CD8-positive, alpha-beta T cell (primary cell): ENCODE measurements at regions of chr2 and their contacts with region 1.

Region 1: GRCh38 chr2:46915811-46916630 is 415 bp upstream of the MCFD2 start:
- DNase-seq: peak; percentile 60 to 92 (median 81)
- ATAC-seq: peak; percentile 80
- H3K4me3 ChIP-seq: peak overlapping the region; percentile 87 to 99
- H3K4me3 Mint-ChIP-seq: peak overlapping the region; percentile 89
- H3K27ac ChIP-seq: peak overlapping the region; percentile 86 to 91
- H3K27ac Mint-ChIP-seq: peak overlapping the region; percentile 85
- H3K4me1 ChIP-seq: peaks cover 39% of the 10 kb centered on the region
- H3K4me1 Mint-ChIP-seq: peaks cover 53% of the 10 kb centered on the region
- H3K27me3 ChIP-seq: no peaks in the 10 kb centered on the region
- H3K27me3 Mint-ChIP-seq: no peaks in the 10 kb centered on the region
- CTCF ChIP-seq: no peak

Region 2: GRCh38 chr2:46836295-46837111 is 79.5 kb before region 1 on chr2:
- CTCF ChIA-PET with region 1: no interaction called
- POLR2A ChIA-PET with region 1: no interaction called
- intact Hi-C with region 1: no loop called
- DNase-seq: no peak
- ATAC-seq: no peak
- H3K4me3 ChIP-seq: no peak overlapping the region
- H3K4me3 Mint-ChIP-seq: no peak overlapping the region
- H3K27ac ChIP-seq: no peak overlapping the region
- H3K27ac Mint-ChIP-seq: no peak overlapping the region
- H3K4me1 ChIP-seq: no peaks in the 10 kb centered on the region
- H3K4me1 Mint-ChIP-seq: no peaks in the 10 kb centered on the region
- H3K27me3 ChIP-seq: no peaks in the 10 kb centered on the region
- H3K27me3 Mint-ChIP-seq: no peaks in the 10 kb centered on the region
- CTCF ChIP-seq: no peak

Region 3: DNA sequence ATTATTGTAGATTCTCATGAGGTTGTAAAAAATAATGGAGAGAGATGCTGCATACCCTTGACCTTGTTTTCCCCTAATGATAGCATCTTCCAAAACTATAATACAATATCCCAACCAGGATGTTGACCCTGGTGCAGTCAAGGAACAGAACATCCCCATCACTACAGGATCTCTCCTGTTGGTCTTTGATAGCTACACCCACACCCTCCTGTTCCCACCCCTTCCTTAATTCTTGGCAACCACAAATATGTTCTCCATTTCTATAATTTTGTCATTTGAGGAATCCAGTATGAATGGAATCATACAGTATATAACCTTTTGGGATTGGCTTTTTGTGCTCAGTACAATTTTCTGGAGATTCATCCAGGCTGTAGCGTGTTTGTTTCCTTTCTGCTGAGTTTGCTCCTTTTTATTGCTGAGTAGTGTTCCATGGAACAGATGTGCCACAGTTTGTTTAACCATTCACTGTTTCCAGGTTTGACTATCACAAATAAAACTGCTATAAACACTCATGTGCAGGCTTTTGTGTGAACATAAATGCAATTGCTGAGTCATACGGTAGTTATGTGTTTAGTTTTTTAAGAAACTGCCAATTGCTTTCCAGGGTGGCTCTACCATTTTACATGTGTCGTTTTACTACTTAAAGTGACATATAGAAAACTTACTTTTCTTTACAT is 22.6 kb before region 1 on chr2:
- CTCF ChIA-PET with region 1: no interaction called
- POLR2A ChIA-PET with region 1: no interaction called
- intact Hi-C with region 1: no loop called
- DNase-seq: no peak
- ATAC-seq: no peak
- H3K4me3 ChIP-seq: no peak overlapping the region
- H3K4me3 Mint-ChIP-seq: no peak overlapping the region
- H3K27ac ChIP-seq: no peak overlapping the region
- H3K27ac Mint-ChIP-seq: no peak overlapping the region
- H3K4me1 ChIP-seq: no peaks in the 10 kb centered on the region
- H3K4me1 Mint-ChIP-seq: peaks cover 2% of the 10 kb centered on the region
- H3K27me3 ChIP-seq: no peaks in the 10 kb centered on the region
- H3K27me3 Mint-ChIP-seq: no peaks in the 10 kb centered on the region
- CTCF ChIP-seq: no peak

Region 4: DNA sequence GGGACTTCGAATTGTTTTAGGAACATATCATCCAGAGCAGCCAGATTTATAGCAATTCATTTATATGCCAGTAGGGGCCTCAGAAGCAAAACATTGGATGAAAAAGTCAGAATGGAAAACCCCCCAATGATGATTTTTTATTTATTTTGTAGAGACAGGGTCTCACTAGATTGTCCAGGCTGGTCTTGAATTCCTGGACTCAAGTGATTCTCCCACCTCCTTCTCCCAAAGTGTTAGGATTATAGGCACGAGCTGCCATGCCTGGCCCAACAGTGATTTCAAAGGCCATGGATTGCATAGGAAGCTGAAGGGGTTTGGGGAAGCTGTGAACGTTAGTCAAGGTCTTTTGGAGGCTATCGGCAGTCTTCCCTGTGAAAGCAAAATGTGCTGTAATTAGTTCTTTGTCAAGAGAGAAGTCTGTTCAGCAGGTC is 21.5 kb after region 1 on chr2:
- CTCF ChIA-PET with region 1: interaction called, 35 read pairs
- POLR2A ChIA-PET with region 1: no interaction called
- intact Hi-C with region 1: loop called in 1 of 2 experiments (anchors 1 kb)
- DNase-seq: peak in 2 of 9 experiments; percentile 33 to 50
- ATAC-seq: no peak
- H3K4me3 ChIP-seq: no peak overlapping the region
- H3K4me3 Mint-ChIP-seq: no peak overlapping the region
- H3K27ac ChIP-seq: no peak overlapping the region
- H3K27ac Mint-ChIP-seq: peak overlapping the region; percentile 55
- H3K4me1 ChIP-seq: peaks cover 9% of the 10 kb centered on the region
- H3K4me1 Mint-ChIP-seq: peaks cover 41% of the 10 kb centered on the region
- H3K27me3 ChIP-seq: no peaks in the 10 kb centered on the region
- H3K27me3 Mint-ChIP-seq: no peaks in the 10 kb centered on the region
- CTCF ChIP-seq: peak; percentile 55

Region 5: GRCh38 chr2:47323009-47323821 is 407.2 kb after region 1 on chr2:
- CTCF ChIA-PET with region 1: interaction called, 3 read pairs
- POLR2A ChIA-PET with region 1: no interaction called
- intact Hi-C with region 1: loop called (anchors 5 kb)
- DNase-seq: peak; percentile 37 to 77 (median 61)
- ATAC-seq: peak; percentile 98
- H3K4me3 ChIP-seq: no peak overlapping the region
- H3K4me3 Mint-ChIP-seq: no peak overlapping the region
- H3K27ac ChIP-seq: no peak overlapping the region
- H3K27ac Mint-ChIP-seq: no peak overlapping the region
- H3K4me1 ChIP-seq: no peaks in the 10 kb centered on the region
- H3K4me1 Mint-ChIP-seq: no peaks in the 10 kb centered on the region
- H3K27me3 ChIP-seq: peaks cover 0 to 5% of the 10 kb centered on the region in 2 experiments
- H3K27me3 Mint-ChIP-seq: peaks cover 9% of the 10 kb centered on the region
- CTCF ChIP-seq: peak; percentile 68

Region 6: DNA sequence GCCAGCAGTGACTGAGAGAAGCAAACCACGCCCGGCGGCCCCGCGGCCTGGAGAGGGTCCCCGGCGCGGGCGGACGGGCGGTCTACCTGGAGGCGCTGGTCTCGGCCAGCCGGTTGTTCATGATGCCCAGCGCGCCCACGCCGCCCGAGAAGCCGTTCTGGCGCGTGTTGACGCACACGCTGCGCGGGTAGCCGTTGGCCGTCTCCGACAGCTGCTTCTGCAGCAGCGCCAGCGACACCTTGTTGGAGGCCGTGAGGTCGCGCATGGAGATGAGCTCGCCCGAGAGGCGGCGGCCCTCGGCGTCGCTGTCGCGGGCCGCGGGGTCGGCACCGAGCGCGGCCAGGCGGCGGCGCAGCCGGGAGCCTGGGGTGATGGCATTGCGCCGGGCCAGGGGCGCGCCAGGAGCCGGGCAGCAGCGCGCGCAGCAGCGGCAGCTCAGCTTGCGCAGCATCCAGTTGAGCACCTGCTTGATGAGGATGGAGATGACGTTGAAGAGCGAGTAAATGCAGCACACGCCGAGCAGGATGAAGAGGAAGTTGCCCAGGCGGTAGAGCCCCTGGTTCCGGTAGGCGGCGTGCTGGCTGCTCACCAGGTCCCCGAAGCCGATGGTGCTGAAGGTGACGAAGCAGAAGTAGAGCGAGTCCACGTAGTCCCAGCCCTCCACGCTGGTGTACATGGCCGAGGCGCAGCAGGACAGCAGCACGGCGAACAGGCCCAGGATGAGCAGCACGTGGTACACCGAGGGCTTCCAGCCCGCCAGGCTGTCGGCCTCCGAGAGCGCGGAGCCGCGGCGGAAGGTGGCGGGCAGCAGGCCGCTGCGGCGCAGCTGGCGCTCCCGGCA is 605.0 kb after region 1 on chr2:
- CTCF ChIA-PET with region 1: no interaction called
- POLR2A ChIA-PET with region 1: no interaction called
- intact Hi-C with region 1: loop called in 1 of 2 experiments (anchors 5 kb)
- DNase-seq: peak; percentile 46 to 86 (median 72)
- ATAC-seq: peak; percentile 87
- H3K4me3 ChIP-seq: peak overlapping the region; percentile 52 to 73
- H3K4me3 Mint-ChIP-seq: peak overlapping the region; percentile 89
- H3K27ac ChIP-seq: peak overlapping the region; percentile 37 to 66
- H3K27ac Mint-ChIP-seq: peak overlapping the region; percentile 90
- H3K4me1 ChIP-seq: peaks cover 14% of the 10 kb centered on the region
- H3K4me1 Mint-ChIP-seq: peaks cover 16% of the 10 kb centered on the region
- H3K27me3 ChIP-seq: no peaks in the 10 kb centered on the region
- H3K27me3 Mint-ChIP-seq: peaks cover 2% of the 10 kb centered on the region
- CTCF ChIP-seq: peak; percentile 25